GM12878 (cell line): ENCODE measurements at regions of chrX and their contacts with region 1.

Region 1: DNA sequence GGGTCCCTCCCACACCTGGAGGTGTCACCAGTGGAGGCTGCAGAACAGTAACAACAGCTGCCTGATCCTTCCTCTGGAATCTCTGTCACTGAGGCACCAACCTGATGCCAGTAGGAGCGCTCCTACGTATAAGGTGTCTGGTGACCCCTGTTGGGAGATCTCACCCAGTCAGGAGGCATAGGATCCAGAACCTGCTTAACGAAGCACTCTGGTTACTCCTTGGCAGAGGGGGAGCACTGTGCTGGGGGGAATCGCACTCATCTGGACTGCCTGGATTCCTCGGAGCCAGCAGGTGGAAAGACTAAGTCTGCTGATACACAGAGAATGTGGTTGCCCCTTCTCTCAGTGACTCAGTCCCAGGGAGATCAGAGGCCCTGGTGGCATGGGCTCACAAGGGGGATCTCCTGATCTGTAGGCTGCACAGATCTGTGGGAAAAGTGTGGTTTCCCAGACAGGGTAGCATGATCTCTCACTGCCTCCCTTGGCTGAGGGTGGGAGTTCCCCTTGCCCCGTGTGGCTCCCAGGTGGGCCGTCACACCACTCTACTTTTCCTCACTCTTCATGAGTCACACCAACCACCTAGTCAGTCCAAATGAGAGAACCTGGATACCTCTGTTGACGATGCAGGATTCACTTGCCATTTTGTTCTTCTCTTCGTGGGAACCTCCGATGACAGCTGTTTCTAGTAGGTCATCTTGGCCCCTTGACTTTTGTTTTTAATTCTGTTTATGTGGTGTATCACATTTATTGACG is 305.9 kb downstream of the IDS start:
- DNase-seq: peak; percentile 82
- ATAC-seq: peak; percentile 85
- H3K4me3 ChIP-seq: no peak overlapping the region
- H3K27ac ChIP-seq: peak overlapping the region; percentile 65
- H3K4me1 ChIP-seq: peaks cover 5% of the 10 kb centered on the region; the same call in 1 of the 2 replicates
- H3K27me3 ChIP-seq: no peaks in the 10 kb centered on the region
- CTCF ChIP-seq: no peak
- EP300 ChIP-seq: peak in 1 of 2 experiments; percentile 35; a peak in 1 of 4 replicates
- POLR2A ChIP-seq: no peak
- RAD21 ChIP-seq: no peak

Region 2: GRCh38 chrX:148885207-148885606 is 313.9 kb before region 1 on chrX:
- CTCF ChIA-PET with region 1: interaction called, 3 read pairs
- POLR2A ChIA-PET with region 1: interaction called, 3 read pairs
- RAD21 ChIA-PET with region 1: interaction called, 10 read pairs
- SMC1A ChIA-PET with region 1: interaction called, 4 read pairs
- in situ Hi-C with region 1: no loop called
- intact Hi-C with region 1: no loop called
- DNase-seq: no peak
- ATAC-seq: peak; percentile 61
- H3K4me3 ChIP-seq: no peak overlapping the region
- H3K27ac ChIP-seq: no peak overlapping the region
- H3K4me1 ChIP-seq: no peaks in the 10 kb centered on the region
- H3K27me3 ChIP-seq: no peaks in the 10 kb centered on the region
- CTCF ChIP-seq: peak in 1 of 3 experiments; percentile 27; a peak in 3 of 6 replicates
- EP300 ChIP-seq: no peak
- POLR2A ChIP-seq: no peak
- RAD21 ChIP-seq: peak; percentile 44

Region 3: GRCh38 chrX:148914783-148915182 is 284.4 kb before region 1 on chrX:
- CTCF ChIA-PET with region 1: no interaction called
- POLR2A ChIA-PET with region 1: no interaction called
- RAD21 ChIA-PET with region 1: no interaction called
- SMC1A ChIA-PET with region 1: interaction called, 8 read pairs
- in situ Hi-C with region 1: no loop called
- intact Hi-C with region 1: loop called (anchors 2 kb)
- DNase-seq: peak; percentile 72
- ATAC-seq: peak; percentile 91
- H3K4me3 ChIP-seq: no peak overlapping the region
- H3K27ac ChIP-seq: peak overlapping the region; percentile 47; the same call in 1 of the 2 replicates
- H3K4me1 ChIP-seq: peaks cover 6% of the 10 kb centered on the region
- H3K27me3 ChIP-seq: no peaks in the 10 kb centered on the region; a peak in 1 of 4 replicates
- CTCF ChIP-seq: no peak
- EP300 ChIP-seq: peak in 1 of 2 experiments; percentile 21; a peak in 2 of 4 replicates
- POLR2A ChIP-seq: no peak
- RAD21 ChIP-seq: 0 out of 2 replicates have a peak, but pooled peaks have one; percentile 5

Region 4: DNA sequence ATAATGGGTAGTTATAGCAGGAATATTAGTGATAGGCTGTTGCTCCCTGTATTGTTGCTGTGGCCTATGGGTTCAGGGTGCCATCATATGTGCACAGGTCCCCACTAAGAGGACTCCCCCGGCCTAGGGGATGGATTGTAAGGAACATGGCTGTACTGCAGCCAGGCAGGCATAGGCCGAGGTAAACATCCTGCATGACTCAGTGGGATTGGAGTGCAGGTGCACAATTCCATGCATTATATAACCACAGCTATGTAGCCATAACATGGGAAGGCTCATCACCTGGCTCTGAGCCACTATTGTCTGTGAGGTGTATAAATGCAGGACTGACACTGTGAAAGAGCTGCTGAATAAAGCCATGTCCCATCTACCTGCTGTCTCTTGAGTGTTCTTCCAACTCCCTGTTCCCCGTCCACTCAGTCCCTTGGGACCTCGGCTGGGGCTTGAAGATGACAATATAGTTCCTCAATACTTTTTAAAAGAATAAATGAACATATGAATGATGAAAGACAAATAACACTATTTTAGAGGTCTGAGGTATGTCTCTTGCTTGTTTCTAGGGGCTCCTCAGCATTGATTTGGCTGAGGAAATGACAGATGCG is 119.2 kb before region 1 on chrX:
- CTCF ChIA-PET with region 1: no interaction called
- POLR2A ChIA-PET with region 1: no interaction called
- RAD21 ChIA-PET with region 1: no interaction called
- SMC1A ChIA-PET with region 1: no interaction called
- in situ Hi-C with region 1: no loop called
- intact Hi-C with region 1: no loop called
- DNase-seq: no peak
- ATAC-seq: no peak
- H3K4me3 ChIP-seq: no peak overlapping the region
- H3K27ac ChIP-seq: no peak overlapping the region
- H3K4me1 ChIP-seq: no peaks in the 10 kb centered on the region
- H3K27me3 ChIP-seq: no peaks in the 10 kb centered on the region
- CTCF ChIP-seq: no peak
- EP300 ChIP-seq: no peak
- POLR2A ChIP-seq: no peak
- RAD21 ChIP-seq: no peak

Region 5: DNA sequence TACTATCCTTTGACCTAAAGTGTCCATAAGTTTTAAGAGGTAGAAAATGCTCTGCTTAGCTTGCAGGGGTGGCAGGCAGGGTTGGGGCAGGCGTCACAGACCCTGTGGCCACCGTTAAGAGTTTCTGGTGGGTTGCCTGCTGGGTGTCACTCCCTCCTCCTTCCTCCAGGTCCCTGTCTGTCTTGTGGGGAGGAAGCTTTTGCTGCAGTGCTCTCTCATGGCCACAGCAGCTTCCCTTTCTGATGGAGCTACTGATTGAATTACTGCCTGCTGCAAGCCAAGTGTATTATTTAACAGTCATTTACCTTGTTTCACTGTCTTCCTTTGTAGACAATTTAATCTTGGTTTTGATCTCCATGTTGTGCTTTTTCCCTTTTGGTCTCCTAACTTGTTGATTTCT is 78.7 kb before region 1 on chrX:
- CTCF ChIA-PET with region 1: interaction called, 5 read pairs
- POLR2A ChIA-PET with region 1: interaction called, 5 read pairs
- RAD21 ChIA-PET with region 1: interaction called, 21 read pairs
- SMC1A ChIA-PET with region 1: interaction called, 19 read pairs
- in situ Hi-C with region 1: no loop called
- intact Hi-C with region 1: loop called (anchors 5 kb)
- DNase-seq: no peak
- ATAC-seq: peak; percentile 64
- H3K4me3 ChIP-seq: no peak overlapping the region
- H3K27ac ChIP-seq: no peak overlapping the region
- H3K4me1 ChIP-seq: no peaks in the 10 kb centered on the region
- H3K27me3 ChIP-seq: no peaks in the 10 kb centered on the region
- CTCF ChIP-seq: 0 out of 6 replicates have a peak, but pooled peaks of 1 of the 3 experiments have one; percentile 3
- EP300 ChIP-seq: no peak
- POLR2A ChIP-seq: no peak
- RAD21 ChIP-seq: peak; percentile 6; the same call in 1 of the 2 replicates

Region 6: DNA sequence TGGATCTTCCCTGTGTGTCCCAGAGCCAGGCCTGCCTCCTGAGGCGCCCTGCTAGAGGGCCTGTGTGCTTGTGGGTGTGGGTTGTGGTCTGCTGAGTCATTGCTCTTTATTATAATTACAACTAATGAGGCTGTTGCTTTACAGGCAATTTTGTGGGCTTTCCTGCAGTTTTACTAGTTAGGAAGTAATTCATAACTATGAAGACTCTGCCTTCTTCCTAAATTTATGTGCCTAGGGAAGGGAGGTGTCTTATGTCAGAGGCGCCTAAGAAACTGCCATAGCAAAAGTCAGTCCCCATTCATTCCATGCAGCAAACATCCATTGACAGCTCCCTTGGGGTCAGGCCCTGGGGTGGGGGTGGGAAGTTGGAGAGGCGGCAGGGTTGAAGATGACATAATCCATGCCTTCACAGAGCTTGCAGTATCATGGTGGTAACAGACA is 53.3 kb before region 1 on chrX:
- CTCF ChIA-PET with region 1: interaction called, 3 read pairs
- POLR2A ChIA-PET with region 1: interaction called, 7 read pairs
- RAD21 ChIA-PET with region 1: interaction called, 55 read pairs
- SMC1A ChIA-PET with region 1: interaction called, 77 read pairs
- in situ Hi-C with region 1: no loop called
- intact Hi-C with region 1: loop called (anchors 1 kb)
- DNase-seq: no peak
- ATAC-seq: peak; percentile 92
- H3K4me3 ChIP-seq: no peak overlapping the region
- H3K27ac ChIP-seq: no peak overlapping the region
- H3K4me1 ChIP-seq: no peaks in the 10 kb centered on the region
- H3K27me3 ChIP-seq: no peaks in the 10 kb centered on the region
- CTCF ChIP-seq: no peak
- EP300 ChIP-seq: peak in 1 of 2 experiments; percentile 17; a peak in 1 of 4 replicates
- POLR2A ChIP-seq: no peak
- RAD21 ChIP-seq: no peak

Region 7: DNA sequence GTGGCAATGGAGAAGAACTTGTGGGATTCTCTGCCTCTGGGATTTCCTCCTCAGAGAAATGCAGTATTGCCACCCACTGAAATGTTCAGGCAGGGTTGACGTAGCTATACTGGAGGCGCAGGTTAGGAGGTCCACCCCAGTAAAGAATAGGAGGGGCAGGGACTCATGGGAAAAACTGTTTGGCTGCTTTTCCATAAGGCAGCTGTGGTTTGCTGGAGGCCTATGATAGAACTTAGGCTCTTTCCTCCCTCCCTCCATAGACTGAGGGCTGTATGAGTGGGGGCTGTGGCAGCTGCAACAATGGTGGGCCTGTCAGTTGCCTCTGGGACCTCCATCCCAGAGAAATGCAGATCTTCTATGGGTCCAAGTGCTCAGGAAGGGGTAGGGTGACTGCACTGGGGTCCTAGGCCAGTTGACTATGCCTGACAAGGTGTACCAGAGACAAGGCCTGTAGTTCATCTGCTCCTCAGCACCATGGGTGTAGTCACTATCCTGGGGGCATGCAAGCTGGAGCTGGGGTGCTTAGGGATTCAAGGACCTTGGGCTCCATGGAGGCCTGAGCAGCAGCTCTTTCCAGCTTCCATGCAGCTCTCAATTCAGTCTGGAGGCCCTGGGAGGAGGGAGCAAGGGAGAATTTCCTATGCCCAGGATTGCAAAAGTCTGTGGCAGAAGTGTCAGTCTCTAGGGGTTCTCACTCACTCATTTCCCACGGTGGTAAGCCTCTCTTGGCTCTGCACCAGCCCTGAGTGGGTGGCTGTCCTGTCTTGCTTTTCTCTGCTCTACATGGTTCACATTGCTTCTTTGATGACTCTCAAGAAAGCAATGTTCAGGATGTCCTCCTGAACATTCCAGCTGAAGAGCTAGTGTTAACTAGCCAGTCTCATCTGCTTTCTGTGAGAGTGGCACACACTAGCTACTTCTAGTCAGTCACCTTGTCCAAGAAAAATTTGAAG is 47.1 kb before region 1 on chrX:
- CTCF ChIA-PET with region 1: interaction called, 7 read pairs
- POLR2A ChIA-PET with region 1: interaction called, 9 read pairs
- RAD21 ChIA-PET with region 1: interaction called, 55 read pairs
- SMC1A ChIA-PET with region 1: interaction called, 77 read pairs
- in situ Hi-C with region 1: no loop called
- intact Hi-C with region 1: loop called (anchors 1 kb)
- DNase-seq: peak; percentile 24
- ATAC-seq: peak; percentile 85
- H3K4me3 ChIP-seq: no peak overlapping the region
- H3K27ac ChIP-seq: no peak overlapping the region
- H3K4me1 ChIP-seq: no peaks in the 10 kb centered on the region
- H3K27me3 ChIP-seq: no peaks in the 10 kb centered on the region
- CTCF ChIP-seq: no peak
- EP300 ChIP-seq: no peak
- POLR2A ChIP-seq: no peak
- RAD21 ChIP-seq: no peak